Activated T-helper 1 cell treated with anti-CD3 and anti-CD28 coated beads, Interleukin-12 subunit alpha, Interleukin-12 subunit beta, Interleukin-2, Interleukin-4 antibody, amounts not matched to agents 30 ng/mL and 10 ng/mL and 1 ng/mL, durations not matched to agents 14 hours and 24 hours and 36 hours (primary cell): ENCODE measurements at regions of chr2 and their contacts with region 1.

Region 1: DNA sequence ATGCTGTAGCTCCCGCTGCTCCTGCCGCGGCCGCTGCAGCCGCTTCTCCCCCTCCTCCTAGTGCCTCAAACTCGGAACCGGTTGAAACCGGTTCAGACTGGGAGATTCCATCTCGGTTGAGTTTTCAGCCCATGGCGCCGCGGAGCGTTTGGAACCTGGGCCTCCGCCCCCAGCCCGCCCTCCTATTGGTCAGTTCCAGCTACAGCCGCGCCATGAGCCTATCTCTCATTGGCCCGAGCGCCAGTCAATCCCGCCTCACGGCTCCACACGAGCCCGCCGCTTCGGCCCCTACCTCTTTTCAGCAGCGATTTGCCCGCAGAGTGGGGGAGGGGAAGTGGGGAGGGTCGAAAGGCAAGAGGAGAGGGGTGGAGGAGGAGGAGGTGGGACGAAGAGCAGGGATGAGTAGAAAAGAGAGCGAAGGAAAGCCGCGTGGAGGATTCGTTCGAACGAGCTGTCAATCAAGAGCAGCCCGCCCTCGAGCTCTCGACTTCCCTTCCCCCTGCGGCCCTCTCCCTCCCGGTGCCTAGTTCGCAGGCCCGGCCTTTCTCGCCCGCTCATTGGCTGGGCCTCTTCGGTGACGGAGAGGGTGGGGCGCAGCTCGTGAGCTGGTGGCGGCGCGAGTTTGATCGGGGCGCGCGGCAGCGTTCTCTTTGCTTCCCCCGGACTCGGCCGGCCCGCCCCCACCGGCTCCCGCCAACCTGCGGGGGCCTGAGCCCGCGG is at the start of gene XPO1:
- DNase-seq: peak; percentile 99
- H3K4me3 Mint-ChIP-seq: peak within 1 kb of the TSS; percentile 100
- H3K27ac Mint-ChIP-seq: peak within 1 kb of the TSS; percentile 100
- H3K4me1 Mint-ChIP-seq: peaks cover 35% of the 10 kb centered on the region
- H3K27me3 Mint-ChIP-seq: peaks cover 4% of the 10 kb centered on the region
- total RNA-seq, gene XPO1: 213 and 215 TPM in 2 replicates

Region 2: GRCh38 chr2:60806988-60807681 is 731.2 kb before region 1 on chr2:
- intact Hi-C with region 1: loop called (anchors 5 kb)
- DNase-seq: no peak
- H3K4me3 Mint-ChIP-seq: peak overlapping the region; percentile 32
- H3K27ac Mint-ChIP-seq: peak overlapping the region; percentile 83
- H3K4me1 Mint-ChIP-seq: peaks cover 46% of the 10 kb centered on the region
- H3K27me3 Mint-ChIP-seq: no peaks in the 10 kb centered on the region

Region 3: GRCh38 chr2:61065715-61066709 is 472.3 kb before region 1 on chr2 and contains the start of gene SANBR:
- intact Hi-C with region 1: loop called (anchors 5 kb)
- DNase-seq: peak; percentile 85
- H3K4me3 Mint-ChIP-seq: peak within 1 kb of the TSS; percentile 92
- H3K27ac Mint-ChIP-seq: peak within 1 kb of the TSS; percentile 87
- H3K4me1 Mint-ChIP-seq: peaks cover 16% of the 10 kb centered on the region
- H3K27me3 Mint-ChIP-seq: peaks cover 5% of the 10 kb centered on the region
- total RNA-seq, gene SANBR: 2.0 and 2.2 TPM in 2 replicates

Region 4: DNA sequence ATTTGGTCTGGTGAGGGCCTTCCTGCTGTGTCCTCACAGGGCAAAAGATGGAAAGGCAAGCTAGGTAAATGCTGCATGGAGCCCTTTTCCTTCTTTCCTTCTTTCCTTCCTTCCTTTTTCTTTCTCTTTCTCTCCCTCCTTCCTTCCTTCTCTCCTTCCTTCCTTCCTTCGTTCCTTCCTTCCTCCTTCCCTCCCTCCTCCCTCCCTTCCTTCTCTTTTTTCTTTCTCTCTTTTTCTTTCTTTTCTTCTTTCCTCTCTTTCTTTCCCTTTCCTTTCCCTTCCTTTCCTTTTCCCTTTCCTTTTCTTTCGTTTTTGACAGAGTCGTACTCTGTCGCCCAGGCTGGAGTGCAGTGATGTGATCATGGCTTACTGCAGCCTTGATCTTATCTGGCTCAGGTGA is 399.5 kb before region 1 on chr2:
- intact Hi-C with region 1: no loop called
- DNase-seq: no peak
- H3K4me3 Mint-ChIP-seq: no peak overlapping the region
- H3K27ac Mint-ChIP-seq: no peak overlapping the region
- H3K4me1 Mint-ChIP-seq: peaks cover 5% of the 10 kb centered on the region
- H3K27me3 Mint-ChIP-seq: peaks cover 1% of the 10 kb centered on the region

Region 5: DNA sequence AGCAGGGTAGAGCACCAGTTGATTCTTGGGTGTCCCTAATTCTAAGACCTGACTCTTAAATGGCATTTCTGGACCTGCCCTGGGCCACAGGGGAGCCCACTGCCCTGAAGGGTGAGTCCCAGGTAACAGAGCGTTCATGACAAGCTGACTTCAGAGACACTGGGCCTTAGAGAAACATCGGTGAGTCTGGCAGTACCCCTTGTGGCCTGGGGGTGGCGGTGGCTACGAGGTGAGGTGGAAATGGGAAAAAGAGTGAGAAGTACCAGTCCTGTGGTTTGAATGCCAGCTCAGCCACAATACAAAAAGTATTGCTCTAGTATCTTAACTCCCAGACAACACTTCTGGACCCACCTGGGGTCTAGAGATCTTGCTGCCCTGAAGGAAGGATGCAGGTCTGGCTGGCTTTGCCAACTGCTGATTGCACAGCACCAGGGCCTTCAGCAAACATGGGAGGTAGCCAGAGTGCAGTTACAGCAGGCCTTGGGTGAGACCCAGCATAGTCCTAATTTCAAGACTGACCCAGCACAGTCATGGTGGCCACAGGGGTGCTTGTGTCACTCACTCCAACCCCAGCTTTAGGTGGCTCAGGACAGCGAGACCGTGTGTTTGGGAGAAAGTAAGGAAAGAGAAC is 112.0 kb before region 1 on chr2:
- intact Hi-C with region 1: loop called (anchors 1 kb)
- DNase-seq: peak; percentile 44
- H3K4me3 Mint-ChIP-seq: no peak overlapping the region
- H3K27ac Mint-ChIP-seq: peak overlapping the region; percentile 26
- H3K4me1 Mint-ChIP-seq: peaks cover 31% of the 10 kb centered on the region
- H3K27me3 Mint-ChIP-seq: no peaks in the 10 kb centered on the region

Region 6: DNA sequence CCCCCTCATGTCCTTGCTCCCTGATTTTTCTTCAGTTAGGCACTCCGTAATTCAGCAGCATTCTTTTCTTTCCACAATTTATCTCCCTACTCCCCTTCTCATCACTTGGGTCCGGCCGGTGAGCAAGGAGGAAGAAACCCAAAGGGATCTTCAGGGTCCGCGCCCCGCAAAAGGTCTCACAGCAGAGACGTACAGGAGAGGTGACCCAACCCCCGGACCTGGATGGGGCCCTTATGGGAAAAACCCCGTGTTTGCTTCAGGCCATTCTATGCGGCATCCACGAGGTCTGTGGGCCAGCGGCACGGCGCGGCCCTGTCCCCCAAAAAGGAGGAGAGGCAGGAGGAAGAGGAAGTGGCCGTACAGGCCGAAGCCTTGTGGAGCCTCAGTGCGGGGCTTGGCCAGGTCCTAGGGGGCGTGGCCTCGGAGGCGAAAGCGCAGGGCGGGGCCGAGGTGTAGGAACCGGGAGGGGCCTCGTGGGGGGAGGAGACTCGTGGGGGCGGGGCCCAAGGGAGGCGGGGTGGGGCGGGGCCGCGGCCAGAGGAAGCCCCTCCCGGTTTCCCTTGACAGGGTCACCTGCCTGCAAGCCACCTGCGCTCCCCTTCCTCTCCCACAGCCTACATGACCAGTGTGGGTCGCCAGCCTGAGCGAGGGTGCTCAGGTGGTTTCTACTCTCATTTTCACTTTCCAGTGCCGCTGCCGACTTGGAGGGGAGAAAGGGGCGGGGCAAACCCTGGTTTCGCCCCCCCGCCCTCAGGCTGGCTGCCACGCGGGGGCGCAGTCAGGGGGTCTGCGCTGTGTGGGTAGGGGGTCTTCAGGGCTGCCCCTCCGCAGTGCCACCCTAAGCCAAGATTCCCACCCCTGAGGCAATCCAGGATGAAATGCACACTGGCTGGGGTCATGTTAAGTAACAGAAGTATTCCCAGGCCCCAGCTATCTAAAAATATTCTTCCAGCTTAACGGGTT is 156.2 kb after region 1 on chr2:
- intact Hi-C with region 1: loop called (anchors 1 kb)
- DNase-seq: peak; percentile 80
- H3K4me3 Mint-ChIP-seq: peak overlapping the region; percentile 89
- H3K27ac Mint-ChIP-seq: peak overlapping the region; percentile 76
- H3K4me1 Mint-ChIP-seq: peaks cover 14% of the 10 kb centered on the region
- H3K27me3 Mint-ChIP-seq: peaks cover 2% of the 10 kb centered on the region

Region 7: GRCh38 chr2:61888267-61889055 is 350.1 kb after region 1 on chr2 and contains the start of gene CCT4:
- intact Hi-C with region 1: loop called (anchors 1 kb)
- DNase-seq: peak; percentile 86
- H3K4me3 Mint-ChIP-seq: peak within 1 kb of the TSS; percentile 95
- H3K27ac Mint-ChIP-seq: peak within 1 kb of the TSS; percentile 97
- H3K4me1 Mint-ChIP-seq: peaks cover 23% of the 10 kb centered on the region
- H3K27me3 Mint-ChIP-seq: no peaks in the 10 kb centered on the region
- total RNA-seq, gene CCT4: 354 and 381 TPM in 2 replicates

Region 8: GRCh38 chr2:61937886-61938285 is 399.5 kb after region 1 on chr2:
- intact Hi-C with region 1: no loop called
- DNase-seq: no peak
- H3K4me3 Mint-ChIP-seq: no peak overlapping the region
- H3K27ac Mint-ChIP-seq: no peak overlapping the region
- H3K4me1 Mint-ChIP-seq: peaks cover under 1% of the 10 kb centered on the region
- H3K27me3 Mint-ChIP-seq: no peaks in the 10 kb centered on the region

Region 9: DNA sequence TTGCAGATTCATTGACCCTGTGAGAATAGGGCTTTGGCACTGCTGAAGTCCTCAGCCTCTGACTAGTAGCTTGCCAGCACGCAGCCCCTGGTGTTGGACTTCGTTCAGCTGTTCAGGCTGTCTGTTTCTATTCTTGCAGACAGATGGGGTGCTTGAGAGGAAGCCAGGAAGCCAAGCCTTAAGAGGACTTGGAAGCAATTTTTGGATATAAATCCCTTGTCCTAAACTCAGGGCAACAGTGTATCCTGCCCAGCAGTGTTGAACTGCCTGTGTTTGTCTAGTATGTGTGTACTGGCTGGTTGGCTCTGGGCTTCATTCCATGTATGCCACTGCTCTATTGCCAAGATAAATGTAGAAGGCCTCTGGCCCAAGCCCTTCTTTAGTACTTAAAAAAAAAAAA is 475.7 kb after region 1 on chr2:
- intact Hi-C with region 1: no loop called
- DNase-seq: no peak
- H3K4me3 Mint-ChIP-seq: no peak overlapping the region
- H3K27ac Mint-ChIP-seq: no peak overlapping the region
- H3K4me1 Mint-ChIP-seq: no peaks in the 10 kb centered on the region
- H3K27me3 Mint-ChIP-seq: no peaks in the 10 kb centered on the region